Posterior cingulate gyrus (tissue), 11 donors: ENCODE measurements at regions of chr12 and their contacts with region 1.

Region 1: DNA sequence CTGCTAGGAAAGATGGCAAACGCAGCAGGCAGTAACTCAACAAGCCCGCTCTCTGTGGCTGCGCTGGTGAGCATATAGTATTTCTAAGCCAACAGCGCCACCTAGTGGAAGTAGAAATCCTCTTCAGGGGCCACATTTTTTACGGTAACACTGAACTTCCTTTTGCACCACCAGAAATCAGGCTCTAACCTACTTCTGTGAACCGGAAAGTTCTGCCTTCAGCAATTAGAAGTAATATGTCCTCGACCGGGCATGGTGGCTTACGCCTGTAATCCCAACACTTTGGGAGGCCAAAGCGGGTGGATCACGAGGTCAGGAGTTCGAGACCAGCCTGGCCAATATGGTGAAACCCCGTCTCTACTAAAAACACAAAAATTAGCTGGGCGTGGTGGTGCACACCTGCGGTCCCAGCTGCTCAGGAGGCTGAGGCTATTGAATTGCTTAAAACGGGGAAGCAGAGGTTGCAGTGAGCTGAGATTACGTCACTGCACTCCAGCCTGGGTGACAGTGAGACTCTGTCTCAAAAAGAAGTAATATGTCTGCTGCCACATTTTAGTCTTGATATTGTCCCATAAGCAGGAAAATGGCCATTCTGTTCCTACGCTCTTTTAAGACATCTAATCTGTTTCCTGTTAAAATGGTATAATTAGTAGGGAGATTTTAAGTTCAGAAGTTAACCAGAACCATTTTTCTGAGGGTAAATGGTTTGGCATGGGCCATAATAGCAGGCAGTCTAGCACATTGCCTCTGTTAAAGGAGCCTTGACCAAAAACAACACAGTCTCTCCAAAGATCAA is 26.8 kb downstream of the APOBEC1 start:
- DNase-seq: peak; percentile 50 to 93 (median 73)

Region 2: DNA sequence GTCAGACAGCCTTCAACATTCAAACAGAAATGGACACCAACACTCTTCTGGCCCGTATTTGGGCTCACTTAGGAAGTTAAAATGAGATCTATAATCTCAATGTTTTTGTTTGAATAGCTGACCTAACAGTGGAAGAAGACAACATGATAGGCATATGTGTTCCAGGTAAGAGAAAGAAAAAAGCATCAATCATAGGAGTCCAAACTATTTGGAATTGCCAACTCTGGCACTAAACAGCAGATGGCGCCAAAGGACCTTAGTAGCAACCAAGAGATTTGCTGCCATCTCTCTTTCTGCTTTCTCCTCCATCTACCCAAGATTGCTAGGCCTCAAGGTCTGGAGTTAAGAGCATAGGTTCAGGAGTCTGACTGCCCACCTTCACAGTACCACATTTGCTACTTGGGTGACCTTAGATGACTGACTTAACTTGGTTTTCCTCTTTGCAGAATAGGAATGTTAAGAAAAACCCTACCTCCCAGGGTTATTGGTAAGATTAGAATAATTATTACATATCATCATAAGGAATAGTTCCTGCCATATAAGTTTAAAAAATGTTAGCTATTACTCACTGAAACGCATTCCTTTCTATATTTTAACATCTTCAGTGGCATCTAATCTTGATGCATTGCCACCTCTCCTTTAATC is 419.2 kb before region 1 on chr12:
- intact Hi-C with region 1: loop called (anchors 1 kb)
- DNase-seq: peak in 8 of 10 donors; percentile 40 to 90 (median 70)

Region 3: GRCh38 chr12:7460375-7461259 is 178.3 kb before region 1 on chr12:
- intact Hi-C with region 1: loop called (anchors 5 kb)
- DNase-seq: peak in 8 of 10 donors; percentile 32 to 86 (median 59)

Region 4: GRCh38 chr12:7583571-7583970 is 55.4 kb before region 1 on chr12:
- intact Hi-C with region 1: loop called (anchors 2 kb)
- DNase-seq: no peak

Region 5: GRCh38 chr12:7612851-7613250 is 26.1 kb before region 1 on chr12:
- intact Hi-C with region 1: no loop called
- DNase-seq: no peak

Region 6: GRCh38 chr12:8088574-8088973 is 449.6 kb after region 1 on chr12:
- intact Hi-C with region 1: no loop called
- DNase-seq: no peak